ENCODE measurements at regions of chr7 and their contacts with region 1.

Region 1: GRCh38 chr7:151244196-151244840 is 4.2 kb downstream of the SMARCD3 start:
- DNase-seq: peak; percentile 52
- ATAC-seq: peak in 1 of 2 donors; percentile 27
- H3K4me3 ChIP-seq: no peak overlapping the region
- H3K27ac ChIP-seq: no peak overlapping the region
- H3K4me1 ChIP-seq: peaks cover 52% of the 10 kb centered on the region
- H3K27me3 ChIP-seq: peaks cover 24% of the 10 kb centered on the region
- CTCF ChIP-seq: peak; percentile 84

Region 2: GRCh38 chr7:151304856-151305255 is 60.5 kb after region 1 on chr7:
- intact Hi-C with region 1: loop called (anchors 5 kb)
- DNase-seq: no peak
- ATAC-seq: no peak
- H3K4me3 ChIP-seq: no peak overlapping the region
- H3K27ac ChIP-seq: no peak overlapping the region
- H3K4me1 ChIP-seq: peaks cover 16% of the 10 kb centered on the region
- H3K27me3 ChIP-seq: peaks cover 31% of the 10 kb centered on the region
- CTCF ChIP-seq: no peak

Measured in lower lobe of right lung (tissue), 2 donors.